GM12878 (cell line): ENCODE measurements at regions of chr10 and their contacts with region 1.

Region 1: DNA sequence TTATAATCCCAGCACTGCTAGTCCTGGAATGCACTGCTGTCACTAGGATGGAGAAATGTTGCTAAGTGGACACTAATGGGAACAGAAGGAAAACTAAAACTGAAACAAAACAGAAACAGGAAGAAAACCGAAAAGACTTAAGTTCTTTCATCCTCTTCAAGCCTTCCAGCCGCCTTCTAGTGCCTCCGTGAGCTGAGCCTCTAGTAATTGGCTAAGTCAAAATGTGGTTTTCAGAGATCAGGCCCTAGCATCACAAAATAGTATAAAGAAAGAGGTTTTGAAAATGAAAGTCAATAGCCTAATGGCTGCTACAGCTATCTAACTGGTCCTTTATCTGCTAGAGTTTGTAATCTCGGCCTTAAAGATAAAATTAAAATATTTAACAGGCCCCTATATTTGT is 253.9 kb upstream of the SORCS1 start:
- DNase-seq: peak; percentile 33
- ATAC-seq: peak; percentile 81
- H3K4me3 ChIP-seq: peak overlapping the region; percentile 4; the same call in 1 of the 2 replicates
- H3K27ac ChIP-seq: peak overlapping the region; percentile 53
- H3K4me1 ChIP-seq: peaks cover 21% of the 10 kb centered on the region
- H3K27me3 ChIP-seq: no peaks in the 10 kb centered on the region
- CTCF ChIP-seq: no peak
- EP300 ChIP-seq: no peak
- POLR2A ChIP-seq: no peak
- RAD21 ChIP-seq: no peak

Region 2: GRCh38 chr10:107434854-107435253 is 16.4 kb after region 1 on chr10:
- CTCF ChIA-PET with region 1: interaction called, 6 read pairs
- POLR2A ChIA-PET with region 1: interaction called, 3 read pairs
- RAD21 ChIA-PET with region 1: interaction called, 10 read pairs
- SMC1A ChIA-PET with region 1: interaction called, 12 read pairs
- in situ Hi-C with region 1: no loop called
- intact Hi-C with region 1: no loop called
- DNase-seq: no peak
- ATAC-seq: no peak; the same call in 1 of the 3 replicates
- H3K4me3 ChIP-seq: no peak overlapping the region
- H3K27ac ChIP-seq: no peak overlapping the region
- H3K4me1 ChIP-seq: 0 out of 2 replicates have a peak, but pooled peaks cover 2% of the 10 kb centered on the region
- H3K27me3 ChIP-seq: no peaks in the 10 kb centered on the region
- CTCF ChIP-seq: no peak
- EP300 ChIP-seq: no peak
- POLR2A ChIP-seq: no peak
- RAD21 ChIP-seq: no peak

Region 3: GRCh38 chr10:107653832-107654287 is 235.5 kb after region 1 on chr10:
- CTCF ChIA-PET with region 1: no interaction called
- POLR2A ChIA-PET with region 1: interaction called, 4 read pairs
- RAD21 ChIA-PET with region 1: no interaction called
- SMC1A ChIA-PET with region 1: interaction called, 3 read pairs
- in situ Hi-C with region 1: no loop called
- intact Hi-C with region 1: loop called (anchors 5 kb)
- DNase-seq: peak; percentile 37
- ATAC-seq: peak; percentile 88
- H3K4me3 ChIP-seq: peak overlapping the region; percentile 62
- H3K27ac ChIP-seq: peak overlapping the region; percentile 41
- H3K4me1 ChIP-seq: 0 out of 2 replicates have a peak, but pooled peaks cover 6% of the 10 kb centered on the region
- H3K27me3 ChIP-seq: no peaks in the 10 kb centered on the region
- CTCF ChIP-seq: no peak
- EP300 ChIP-seq: no peak
- POLR2A ChIP-seq: no peak
- RAD21 ChIP-seq: no peak

Region 4: DNA sequence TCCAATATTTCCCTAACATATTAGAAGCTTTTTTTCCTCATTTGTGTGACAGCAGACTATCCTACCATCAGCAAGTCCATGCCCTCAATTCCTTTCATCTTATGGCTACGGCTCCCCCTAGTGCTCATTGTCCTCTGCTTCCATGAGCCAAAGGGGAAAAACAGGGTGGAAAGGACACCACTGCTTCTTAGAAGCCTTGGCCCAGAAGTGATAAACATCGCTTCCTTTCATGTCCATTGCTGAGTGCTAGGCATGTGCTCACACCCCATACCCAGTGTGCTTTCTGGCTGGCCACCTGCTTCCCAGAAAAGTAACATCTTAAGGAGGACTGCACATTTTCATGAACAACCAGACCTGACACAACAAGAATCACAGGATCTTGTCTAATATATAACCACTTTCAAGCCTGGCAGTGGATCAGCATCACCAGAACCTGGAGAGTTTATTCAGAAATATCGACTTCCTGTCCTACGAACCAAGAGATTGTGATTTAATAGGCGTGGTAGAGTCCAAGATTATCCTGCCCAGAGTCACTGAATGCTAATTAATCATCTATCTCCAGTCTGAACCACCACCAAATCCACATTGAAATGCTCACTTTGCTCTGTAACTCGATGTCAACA is 396.6 kb after region 1 on chr10:
- CTCF ChIA-PET with region 1: interaction called, 4 read pairs
- POLR2A ChIA-PET with region 1: no interaction called
- RAD21 ChIA-PET with region 1: interaction called, 3 read pairs
- SMC1A ChIA-PET with region 1: interaction called, 129 read pairs
- in situ Hi-C with region 1: loop called (anchors 5 kb)
- intact Hi-C with region 1: no loop called
- DNase-seq: peak; percentile 20
- ATAC-seq: peak; percentile 95
- H3K4me3 ChIP-seq: no peak overlapping the region
- H3K27ac ChIP-seq: no peak overlapping the region
- H3K4me1 ChIP-seq: no peaks in the 10 kb centered on the region
- H3K27me3 ChIP-seq: no peaks in the 10 kb centered on the region
- CTCF ChIP-seq: peak; percentile 59 to 81 (median 74)
- EP300 ChIP-seq: no peak
- POLR2A ChIP-seq: no peak
- RAD21 ChIP-seq: peak; percentile 87